ENCODE measurements at regions of chr7 and their contacts with region 1.

Region 1: GRCh38 chr7:92228100-92228499 is 17.6 kb downstream of the KRIT1 start:
- DNase-seq: no peak
- ATAC-seq: no peak
- H3K4me3 ChIP-seq: no peak overlapping the region
- H3K27ac ChIP-seq: no peak overlapping the region
- H3K4me1 ChIP-seq: no peaks in the 10 kb centered on the region
- H3K27me3 ChIP-seq: no peaks in the 10 kb centered on the region
- CTCF ChIP-seq: no peak
- POLR2A ChIP-seq: no peak

Region 2: DNA sequence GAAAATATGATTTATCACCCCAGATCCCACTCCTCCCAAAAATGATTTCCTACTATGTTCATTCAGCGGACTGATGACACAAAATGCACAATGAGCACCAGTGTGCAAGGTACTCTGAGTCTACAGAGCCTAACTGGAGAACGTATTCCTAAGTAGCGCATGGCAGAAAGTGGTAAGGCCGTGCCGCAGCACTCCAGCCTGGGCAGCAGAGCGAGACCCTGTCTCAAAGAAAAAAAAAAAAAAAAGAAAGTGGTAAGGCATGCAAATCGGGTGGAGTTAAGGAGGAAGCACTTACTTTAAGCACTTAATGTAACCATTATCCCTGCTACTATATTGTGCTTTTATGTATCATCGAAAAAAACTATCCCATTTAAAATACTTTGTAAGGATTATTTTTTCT is 119.3 kb before region 1 on chr7:
- intact Hi-C with region 1: loop called in 2 of 10 experiments (anchors 10 kb)
- DNase-seq: no peak
- ATAC-seq: no peak
- H3K4me3 ChIP-seq: no peak overlapping the region
- H3K27ac ChIP-seq: no peak overlapping the region
- H3K4me1 ChIP-seq: peaks cover 0 to 8% (median 0%) of the 10 kb centered on the region in 12 donors
- H3K27me3 ChIP-seq: no peaks in the 10 kb centered on the region
- CTCF ChIP-seq: no peak
- POLR2A ChIP-seq: no peak

Region 3: GRCh38 chr7:92119213-92119759 is 108.8 kb before region 1 on chr7:
- intact Hi-C with region 1: loop called in 1 of 10 experiments (anchors 10 kb)
- DNase-seq: no peak
- ATAC-seq: no peak
- H3K4me3 ChIP-seq: no peak overlapping the region
- H3K27ac ChIP-seq: no peak overlapping the region
- H3K4me1 ChIP-seq: no peaks in the 10 kb centered on the region
- H3K27me3 ChIP-seq: no peaks in the 10 kb centered on the region
- CTCF ChIP-seq: no peak
- POLR2A ChIP-seq: no peak